Endothelial cell of umbilical vein (primary cell): ENCODE measurements at regions of chr5 and their contacts with region 1.

Region 1: DNA sequence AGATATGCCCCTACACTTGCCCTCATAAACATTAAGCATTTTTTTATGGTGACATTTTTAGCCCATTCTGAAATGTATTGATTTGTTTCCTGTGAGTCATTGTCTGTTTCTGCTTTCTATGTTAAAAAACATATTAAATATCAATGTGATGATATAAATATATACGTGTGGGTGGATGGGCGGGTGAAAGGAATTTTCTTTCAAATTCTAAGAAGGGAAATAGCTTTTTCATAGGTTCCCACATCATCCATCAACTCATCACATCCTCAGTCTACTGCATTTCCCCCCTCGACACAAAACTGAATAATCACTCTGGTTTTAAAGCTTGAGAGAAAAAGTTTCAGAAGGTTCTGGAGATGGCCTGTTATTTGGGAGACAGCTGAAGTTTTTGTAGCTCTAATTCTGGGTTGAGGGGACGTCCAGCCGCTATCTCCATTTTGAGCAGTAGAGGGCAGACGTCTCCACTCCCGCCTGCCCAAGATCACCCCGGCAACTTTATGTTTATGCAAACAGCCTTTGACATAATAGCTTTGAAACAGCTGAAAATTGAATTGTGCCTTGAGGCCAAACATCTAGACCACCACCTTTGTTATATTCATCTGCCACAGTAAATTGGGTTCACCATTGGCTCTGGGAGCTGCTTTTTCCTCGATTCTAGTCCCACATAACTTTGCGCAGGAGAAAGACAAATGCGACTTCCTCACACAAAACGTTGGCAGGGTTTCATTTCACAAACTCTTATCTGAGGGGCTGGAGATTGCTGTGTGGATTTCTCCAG is 216.2 kb upstream of the CLINT1 start:
- DNase-seq: peak; percentile 92
- H3K4me3 ChIP-seq: peak overlapping the region in 2 of 3 experiments; percentile 8 to 50
- H3K27ac ChIP-seq: peak overlapping the region; percentile 97
- H3K4me1 ChIP-seq: peaks cover 18% of the 10 kb centered on the region
- H3K27me3 ChIP-seq: no peaks in the 10 kb centered on the region
- CTCF ChIP-seq: peak; percentile 86 to 87
- POLR2A ChIP-seq: no peak

Region 2: DNA sequence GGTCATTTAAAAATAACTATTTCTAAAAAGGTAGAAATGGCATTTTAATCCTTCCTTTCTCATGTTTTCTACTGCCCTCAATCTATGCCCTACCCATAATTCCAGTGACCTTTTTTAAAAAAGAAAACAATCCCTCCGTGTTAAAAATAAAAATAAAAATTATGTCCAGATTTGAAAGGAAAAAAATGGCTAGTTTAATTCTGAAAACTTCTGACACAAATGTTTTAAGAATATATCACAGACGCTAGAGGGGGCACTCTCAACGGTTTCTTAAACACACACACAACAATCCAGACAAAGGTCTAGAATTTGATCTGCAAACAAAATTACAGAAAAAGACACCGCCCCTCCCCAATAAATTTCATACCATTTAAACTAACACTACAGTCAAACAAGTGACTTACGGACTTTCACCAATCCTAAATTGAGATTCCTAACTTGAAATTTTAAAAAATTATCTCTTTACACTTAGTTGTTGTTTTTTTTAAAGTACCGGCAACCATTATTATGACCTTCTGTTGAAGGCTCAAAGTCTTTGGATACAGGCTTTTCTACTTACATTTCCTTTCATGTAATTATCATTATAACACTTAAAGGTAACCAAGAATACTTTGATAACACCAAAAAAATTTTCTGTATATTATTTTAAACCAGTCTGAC is 254.5 kb before region 1 on chr5:
- CTCF ChIA-PET with region 1: interaction called, 9 read pairs
- POLR2A ChIA-PET with region 1: no interaction called
- dilution Hi-C with region 1: no loop called
- intact Hi-C with region 1: loop called (anchors 2 kb)
- DNase-seq: peak; percentile 80
- H3K4me3 ChIP-seq: no peak overlapping the region
- H3K27ac ChIP-seq: no peak overlapping the region
- H3K4me1 ChIP-seq: peaks cover 14% of the 10 kb centered on the region
- H3K27me3 ChIP-seq: no peaks in the 10 kb centered on the region
- CTCF ChIP-seq: peak; percentile 36 to 39
- POLR2A ChIP-seq: no peak

Region 3: GRCh38 chr5:158054223-158055110 is 20.7 kb before region 1 on chr5:
- CTCF ChIA-PET with region 1: interaction called, 10 read pairs
- POLR2A ChIA-PET with region 1: no interaction called
- dilution Hi-C with region 1: no loop called
- intact Hi-C with region 1: loop called (anchors 1 kb)
- DNase-seq: peak; percentile 64
- H3K4me3 ChIP-seq: no peak overlapping the region
- H3K27ac ChIP-seq: no peak overlapping the region
- H3K4me1 ChIP-seq: no peaks in the 10 kb centered on the region
- H3K27me3 ChIP-seq: no peaks in the 10 kb centered on the region
- CTCF ChIP-seq: no peak
- POLR2A ChIP-seq: no peak

Region 4: GRCh38 chr5:158127536-158127935 is 52.4 kb after region 1 on chr5:
- CTCF ChIA-PET with region 1: interaction called, 12 read pairs
- POLR2A ChIA-PET with region 1: no interaction called
- dilution Hi-C with region 1: no loop called
- intact Hi-C with region 1: no loop called
- DNase-seq: no peak
- H3K4me3 ChIP-seq: no peak overlapping the region
- H3K27ac ChIP-seq: no peak overlapping the region
- H3K4me1 ChIP-seq: no peaks in the 10 kb centered on the region
- H3K27me3 ChIP-seq: no peaks in the 10 kb centered on the region
- CTCF ChIP-seq: no peak
- POLR2A ChIP-seq: no peak

Region 5: GRCh38 chr5:158170060-158170459 is 94.9 kb after region 1 on chr5:
- CTCF ChIA-PET with region 1: interaction called, 97 read pairs
- POLR2A ChIA-PET with region 1: no interaction called
- dilution Hi-C with region 1: no loop called
- intact Hi-C with region 1: loop called (anchors 1 kb)
- DNase-seq: no peak
- H3K4me3 ChIP-seq: no peak overlapping the region
- H3K27ac ChIP-seq: no peak overlapping the region
- H3K4me1 ChIP-seq: no peaks in the 10 kb centered on the region
- H3K27me3 ChIP-seq: no peaks in the 10 kb centered on the region
- CTCF ChIP-seq: no peak
- POLR2A ChIP-seq: no peak

Region 6: GRCh38 chr5:158390577-158390976 is 315.4 kb after region 1 on chr5:
- CTCF ChIA-PET with region 1: interaction called, 14 read pairs
- POLR2A ChIA-PET with region 1: no interaction called
- dilution Hi-C with region 1: no loop called
- intact Hi-C with region 1: loop called (anchors 1 kb)
- DNase-seq: peak; percentile 95
- H3K4me3 ChIP-seq: no peak overlapping the region
- H3K27ac ChIP-seq: peak overlapping the region; percentile 74
- H3K4me1 ChIP-seq: peaks cover 40% of the 10 kb centered on the region
- H3K27me3 ChIP-seq: no peaks in the 10 kb centered on the region
- CTCF ChIP-seq: no peak
- POLR2A ChIP-seq: peak; percentile 62

Region 7: GRCh38 chr5:159133041-159133741 is 1058.0 kb after region 1 on chr5:
- CTCF ChIA-PET with region 1: interaction called, 15 read pairs
- POLR2A ChIA-PET with region 1: no interaction called
- dilution Hi-C with region 1: no loop called
- intact Hi-C with region 1: loop called (anchors 1 kb)
- DNase-seq: peak; percentile 62
- H3K4me3 ChIP-seq: no peak overlapping the region
- H3K27ac ChIP-seq: no peak overlapping the region
- H3K4me1 ChIP-seq: no peaks in the 10 kb centered on the region
- H3K27me3 ChIP-seq: peaks cover 2 to 9% of the 10 kb centered on the region in 2 experiments
- CTCF ChIP-seq: peak; percentile 45 to 46
- POLR2A ChIP-seq: no peak